ENCODE measurements at regions of chr18 and their contacts with region 1.

Region 1: GRCh38 chr18:49819823-49820671 is 6.7 kb upstream of the ACAA2 start:
- DNase-seq: peak; percentile 72
- ATAC-seq: peak; percentile 83
- H3K4me3 Mint-ChIP-seq: peak overlapping the region; percentile 66
- H3K27ac Mint-ChIP-seq: peak overlapping the region; percentile 93
- H3K4me1 Mint-ChIP-seq: peaks cover 72% of the 10 kb centered on the region
- H3K27me3 Mint-ChIP-seq: no peaks in the 10 kb centered on the region

Region 2: GRCh38 chr18:49784427-49785185 is 35.4 kb before region 1 on chr18:
- CTCF ChIA-PET with region 1: interaction called, 10 read pairs
- POLR2A ChIA-PET with region 1: no interaction called
- DNase-seq: no peak
- ATAC-seq: no peak
- H3K4me3 Mint-ChIP-seq: no peak overlapping the region
- H3K27ac Mint-ChIP-seq: peak overlapping the region; percentile 18
- H3K4me1 Mint-ChIP-seq: peaks cover 46% of the 10 kb centered on the region
- H3K27me3 Mint-ChIP-seq: no peaks in the 10 kb centered on the region

Region 3: GRCh38 chr18:49834258-49834657 is 14.2 kb after region 1 on chr18:
- CTCF ChIA-PET with region 1: no interaction called
- POLR2A ChIA-PET with region 1: no interaction called
- DNase-seq: no peak
- ATAC-seq: no peak
- H3K4me3 Mint-ChIP-seq: no peak overlapping the region
- H3K27ac Mint-ChIP-seq: no peak overlapping the region
- H3K4me1 Mint-ChIP-seq: no peaks in the 10 kb centered on the region
- H3K27me3 Mint-ChIP-seq: no peaks in the 10 kb centered on the region